Activated CD4-positive, alpha-beta T cell treated with anti-CD3 and anti-CD28 coated beads for 36 hours (primary cell): ENCODE measurements at regions of chr20 and their contacts with region 1.

Region 1: GRCh38 chr20:5126512-5127203 is at the start of gene CDS2:
- DNase-seq: peak; percentile 100
- ATAC-seq: peak; percentile 89
- H3K4me3 Mint-ChIP-seq: peak within 1 kb of the TSS; percentile 80
- H3K27ac Mint-ChIP-seq: peak within 1 kb of the TSS; percentile 95
- H3K4me1 Mint-ChIP-seq: peaks cover 34% of the 10 kb centered on the region
- H3K27me3 Mint-ChIP-seq: no peaks in the 10 kb centered on the region
- total RNA-seq, gene CDS2: 34.3 to 41.3 TPM

Region 2: DNA sequence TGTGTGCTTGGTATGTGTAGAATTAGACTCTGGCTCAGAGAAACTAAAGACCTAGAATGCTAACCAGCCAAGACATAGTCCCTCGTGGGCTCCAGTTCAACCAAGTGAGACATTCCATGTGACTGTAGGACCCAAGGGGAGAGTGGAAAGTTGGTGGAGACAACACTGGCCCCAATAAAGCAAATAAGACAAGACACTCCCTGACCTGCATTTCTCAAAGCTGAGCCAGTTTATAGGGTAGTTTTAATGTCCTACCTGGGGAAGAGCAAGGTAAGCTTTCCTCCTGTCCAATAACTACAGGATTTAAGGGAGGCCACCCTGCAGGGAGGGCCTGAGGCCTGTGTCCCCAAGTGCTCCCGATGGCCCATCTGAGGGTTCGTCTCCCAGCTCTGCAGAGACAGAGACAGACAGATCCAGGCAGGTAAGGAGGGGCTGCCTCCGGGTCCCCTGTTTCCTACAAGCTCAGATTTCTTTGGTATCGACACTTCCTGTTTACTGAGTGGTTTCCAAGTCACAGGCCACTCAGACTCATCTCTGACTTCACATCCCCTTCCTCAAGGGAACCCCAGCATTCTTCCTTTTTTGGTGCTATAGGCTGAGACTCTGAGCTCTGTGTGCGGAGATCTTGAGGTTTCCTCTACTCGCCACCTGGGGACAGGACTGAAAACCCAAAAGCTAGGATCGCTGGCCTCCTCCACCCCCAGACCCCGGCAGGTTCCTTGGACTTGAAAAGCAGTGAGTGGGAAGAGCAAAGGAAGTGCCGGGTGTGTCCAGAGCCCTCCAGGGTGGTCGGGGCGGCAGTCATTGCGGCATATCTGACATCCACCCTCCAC is 312.6 kb before region 1 on chr20:
- CTCF ChIA-PET with region 1: no interaction called
- POLR2A ChIA-PET with region 1: interaction called, 8 read pairs
- intact Hi-C with region 1: loop called in 1 of 2 experiments (anchors 5 kb)
- DNase-seq: peak; percentile 69
- ATAC-seq: peak; percentile 73
- H3K4me3 Mint-ChIP-seq: peak overlapping the region; percentile 96
- H3K27ac Mint-ChIP-seq: peak overlapping the region; percentile 100
- H3K4me1 Mint-ChIP-seq: peaks cover 73% of the 10 kb centered on the region
- H3K27me3 Mint-ChIP-seq: no peaks in the 10 kb centered on the region

Region 3: DNA sequence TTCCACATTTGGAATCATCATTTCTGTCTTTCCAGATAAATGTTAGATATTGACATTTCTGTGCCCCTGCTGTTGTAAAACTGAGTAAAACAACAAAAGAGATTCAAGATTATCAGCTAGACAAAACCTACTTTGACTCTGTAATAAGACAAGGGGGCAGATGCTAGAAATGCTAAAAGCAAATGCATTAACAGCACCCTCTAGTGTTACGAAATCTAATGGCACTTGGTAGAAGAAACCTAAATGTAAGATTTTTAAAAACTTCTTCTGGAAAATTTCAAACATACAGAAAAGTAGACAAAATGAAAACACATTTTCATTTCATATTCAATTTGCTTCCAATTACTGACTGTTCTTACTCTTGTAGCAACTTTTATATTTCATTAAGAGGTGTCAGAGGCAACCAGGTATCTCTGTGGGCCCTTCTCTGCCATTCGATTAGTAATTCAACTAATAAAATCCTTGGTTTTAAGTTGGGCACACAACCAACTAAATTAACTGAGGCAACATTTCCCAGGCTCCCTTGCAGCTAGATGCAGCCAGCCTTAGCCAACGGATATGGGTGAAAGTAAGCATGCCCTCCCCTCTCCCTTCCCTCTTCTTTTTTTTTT is 170.4 kb before region 1 on chr20:
- CTCF ChIA-PET with region 1: no interaction called
- POLR2A ChIA-PET with region 1: no interaction called
- intact Hi-C with region 1: no loop called
- DNase-seq: no peak
- ATAC-seq: peak; percentile 77
- H3K4me3 Mint-ChIP-seq: no peak overlapping the region
- H3K27ac Mint-ChIP-seq: no peak overlapping the region
- H3K4me1 Mint-ChIP-seq: peaks cover 15% of the 10 kb centered on the region
- H3K27me3 Mint-ChIP-seq: no peaks in the 10 kb centered on the region

Region 4: GRCh38 chr20:5041433-5041832 is 85.2 kb before region 1 on chr20:
- CTCF ChIA-PET with region 1: no interaction called
- POLR2A ChIA-PET with region 1: no interaction called
- intact Hi-C with region 1: no loop called
- DNase-seq: no peak
- ATAC-seq: no peak
- H3K4me3 Mint-ChIP-seq: no peak overlapping the region
- H3K27ac Mint-ChIP-seq: no peak overlapping the region
- H3K4me1 Mint-ChIP-seq: peaks cover 4% of the 10 kb centered on the region
- H3K27me3 Mint-ChIP-seq: no peaks in the 10 kb centered on the region

Region 5: DNA sequence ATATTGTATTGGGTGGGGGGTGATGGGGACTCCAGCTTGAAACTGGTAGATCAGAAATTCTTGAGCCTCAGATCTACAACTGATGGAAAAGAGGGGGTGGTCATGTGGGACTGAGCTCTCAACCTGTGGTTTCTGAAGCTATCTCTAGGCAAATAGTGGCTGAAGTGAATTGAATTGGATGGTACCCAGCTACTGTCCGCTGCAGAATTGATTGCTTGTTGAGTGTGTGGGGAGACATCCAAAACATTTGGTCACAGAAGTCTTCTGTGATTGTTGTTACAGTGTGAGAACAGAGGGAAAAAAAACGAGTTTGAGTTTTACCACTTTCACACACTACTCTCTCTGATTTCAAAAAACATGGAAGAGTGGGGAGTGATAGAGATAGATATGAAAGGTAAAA is 15.0 kb after region 1 on chr20:
- CTCF ChIA-PET with region 1: interaction called, 6 read pairs
- POLR2A ChIA-PET with region 1: interaction called, 4 read pairs
- intact Hi-C with region 1: loop called (anchors 1 to 2 kb)
- DNase-seq: no peak
- ATAC-seq: no peak
- H3K4me3 Mint-ChIP-seq: no peak overlapping the region
- H3K27ac Mint-ChIP-seq: no peak overlapping the region
- H3K4me1 Mint-ChIP-seq: peaks cover 57% of the 10 kb centered on the region
- H3K27me3 Mint-ChIP-seq: no peaks in the 10 kb centered on the region

Region 6: DNA sequence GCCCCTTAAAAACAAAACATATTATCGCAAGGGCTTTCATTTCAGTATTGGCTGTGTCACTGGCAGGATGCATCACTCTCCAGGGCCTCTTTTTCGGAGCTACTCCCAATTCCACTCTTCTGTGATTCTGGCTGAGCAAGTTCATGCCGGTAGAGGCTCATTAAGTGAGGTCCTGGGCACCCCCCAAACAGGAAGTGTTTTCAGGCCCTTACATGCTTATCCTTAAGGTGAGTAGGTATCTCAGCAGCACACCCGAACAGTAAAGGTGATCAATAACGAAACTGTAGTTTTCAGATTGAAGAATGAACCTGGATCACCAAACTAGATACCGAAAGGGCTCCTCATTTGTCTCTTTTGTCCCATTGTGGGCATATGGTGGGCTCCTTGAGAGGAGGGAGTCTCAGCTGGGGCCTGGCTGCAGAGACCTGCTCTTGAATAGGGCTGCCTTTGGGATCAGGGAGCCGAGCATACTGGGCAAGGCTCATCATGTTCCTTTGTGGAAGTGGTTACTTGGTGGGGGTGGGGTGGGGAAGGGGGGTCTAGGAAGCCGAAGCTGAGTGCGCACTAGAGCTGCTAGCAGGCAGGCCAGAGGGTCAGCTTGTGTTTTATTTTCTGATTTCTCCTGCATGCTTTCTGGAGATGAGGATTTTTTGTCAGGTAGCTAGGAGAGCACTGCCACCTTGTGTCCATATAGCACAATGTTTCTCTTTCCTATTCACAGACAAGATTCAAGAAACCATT is 65.3 kb after region 1 on chr20:
- CTCF ChIA-PET with region 1: interaction called, 104 read pairs
- POLR2A ChIA-PET with region 1: interaction called, 18 read pairs
- intact Hi-C with region 1: loop called (anchors 1 kb)
- DNase-seq: peak; percentile 46
- ATAC-seq: peak; percentile 79
- H3K4me3 Mint-ChIP-seq: no peak overlapping the region
- H3K27ac Mint-ChIP-seq: peak overlapping the region; percentile 80
- H3K4me1 Mint-ChIP-seq: peaks cover 19% of the 10 kb centered on the region
- H3K27me3 Mint-ChIP-seq: no peaks in the 10 kb centered on the region

Region 7: GRCh38 chr20:5448449-5449118 is 321.9 kb after region 1 on chr20:
- CTCF ChIA-PET with region 1: no interaction called
- POLR2A ChIA-PET with region 1: no interaction called
- intact Hi-C with region 1: loop called in 1 of 2 experiments (anchors 5 kb)
- DNase-seq: peak; percentile 73
- ATAC-seq: no peak
- H3K4me3 Mint-ChIP-seq: no peak overlapping the region
- H3K27ac Mint-ChIP-seq: no peak overlapping the region
- H3K4me1 Mint-ChIP-seq: no peaks in the 10 kb centered on the region
- H3K27me3 Mint-ChIP-seq: peaks cover 17% of the 10 kb centered on the region

Region 8: DNA sequence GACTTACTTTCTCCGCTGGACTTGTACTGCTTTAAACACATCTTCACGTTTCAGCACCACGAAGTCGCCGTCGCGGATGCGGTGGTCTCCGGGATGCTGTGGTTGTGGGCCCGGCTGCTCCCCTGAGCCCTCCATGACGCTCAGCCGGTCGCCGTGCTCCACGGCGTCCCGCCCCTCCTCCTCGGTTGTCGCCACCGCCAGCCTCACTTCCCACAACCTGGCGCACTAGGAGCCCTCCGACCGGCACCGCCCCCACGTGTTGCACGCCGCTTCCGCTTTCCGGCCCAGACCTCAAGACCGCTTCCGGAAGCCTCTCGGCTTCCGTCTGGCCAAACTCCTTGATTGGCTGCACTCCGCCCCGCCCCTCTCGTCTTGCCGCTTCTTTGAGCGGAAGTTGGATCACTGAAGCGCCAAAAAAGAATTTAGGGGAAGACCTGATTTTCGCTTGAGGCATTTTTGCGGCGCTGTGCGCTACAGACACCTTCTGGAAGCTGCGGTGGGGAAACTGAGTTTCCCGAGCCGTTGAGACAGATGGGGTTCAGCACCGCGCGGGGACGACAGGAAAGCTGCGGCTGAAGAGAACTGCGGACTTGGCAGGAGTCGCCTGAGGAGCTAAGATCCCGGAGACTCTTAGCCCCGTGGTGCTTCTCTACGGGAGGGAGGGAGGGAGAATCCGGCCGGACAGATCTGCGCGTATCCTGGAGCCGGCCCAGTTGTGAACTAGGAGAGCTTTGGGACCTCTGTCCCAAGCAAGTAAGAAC is 823.8 kb after region 1 on chr20 and contains the starts of genes MCM8 and TRMT6:
- CTCF ChIA-PET with region 1: no interaction called
- POLR2A ChIA-PET with region 1: no interaction called
- intact Hi-C with region 1: loop called in 1 of 2 experiments (anchors 2 kb)
- DNase-seq: peak; percentile 98
- ATAC-seq: peak; percentile 87
- H3K4me3 Mint-ChIP-seq: peak within 1 kb of the TSS; percentile 95
- H3K27ac Mint-ChIP-seq: peak within 1 kb of the TSS; percentile 96
- H3K4me1 Mint-ChIP-seq: peaks cover 49% of the 10 kb centered on the region
- H3K27me3 Mint-ChIP-seq: no peaks in the 10 kb centered on the region
- total RNA-seq, gene MCM8: 42.5 to 45.4 TPM
- total RNA-seq, gene TRMT6: 20.9 to 27.3 TPM